BJ (cell line): ENCODE measurements at regions of chrX and their contacts with region 1.

Region 1: GRCh38 chrX:53317365-53318069 is 36.1 kb upstream of the IQSEC2 start:
- DNase-seq: no peak
- H3K4me3 ChIP-seq: no peak overlapping the region
- H3K27me3 ChIP-seq: peaks cover 18% of the 10 kb centered on the region
- CTCF ChIP-seq: peak; percentile 81

Region 2: DNA sequence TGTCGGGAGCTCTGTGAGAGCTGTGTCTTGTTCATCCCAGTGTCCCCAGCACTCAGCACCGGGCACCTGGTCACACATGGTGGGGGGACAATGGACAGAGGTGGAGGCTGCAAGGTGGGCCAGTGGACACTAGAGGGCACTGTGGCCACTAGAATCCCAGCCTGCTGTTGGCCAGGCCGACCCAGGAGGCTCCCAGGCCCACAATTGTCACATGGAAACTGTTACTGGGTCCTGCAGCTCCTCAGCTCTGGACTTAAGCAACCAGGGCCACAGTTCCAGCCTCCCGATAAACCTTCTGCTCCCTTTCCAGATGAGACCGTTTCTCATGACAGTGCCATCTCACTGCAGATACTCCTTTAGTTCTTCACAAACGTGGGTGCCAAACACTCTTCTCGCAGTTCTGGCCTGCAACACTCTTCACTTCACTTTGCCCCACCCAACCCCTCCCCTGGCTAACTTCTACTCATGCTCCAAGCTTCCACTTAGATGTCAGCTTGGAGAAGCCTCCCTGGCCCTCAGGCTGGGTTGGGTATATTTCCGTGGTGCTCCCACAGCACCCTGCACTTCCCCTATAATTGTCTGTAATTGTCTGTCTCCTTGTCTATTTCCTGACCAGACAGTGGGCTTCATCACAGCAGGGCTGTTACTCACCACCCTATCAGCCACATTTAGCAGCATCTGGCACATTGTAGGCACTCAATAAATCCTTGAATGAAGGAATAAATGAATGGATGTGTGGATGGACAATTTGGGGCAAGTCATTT is 32.7 kb before region 1 on chrX:
- CTCF ChIA-PET with region 1: interaction called, 18 read pairs
- POLR2A ChIA-PET with region 1: interaction called, 3 read pairs
- DNase-seq: no peak
- H3K4me3 ChIP-seq: no peak overlapping the region
- H3K27me3 ChIP-seq: no peaks in the 10 kb centered on the region
- CTCF ChIP-seq: peak; percentile 77

Region 3: GRCh38 chrX:53305996-53306937 is 11.2 kb before region 1 on chrX:
- CTCF ChIA-PET with region 1: interaction called, 10 read pairs
- POLR2A ChIA-PET with region 1: no interaction called
- DNase-seq: no peak
- H3K4me3 ChIP-seq: no peak overlapping the region
- H3K27me3 ChIP-seq: no peaks in the 10 kb centered on the region
- CTCF ChIP-seq: no peak

Region 4: GRCh38 chrX:53433651-53434639 is 116.4 kb after region 1 on chrX and contains the start of gene HSD17B10:
- CTCF ChIA-PET with region 1: interaction called, 17 read pairs
- POLR2A ChIA-PET with region 1: no interaction called
- DNase-seq: no peak
- H3K4me3 ChIP-seq: peak within 1 kb of the TSS; percentile 72
- H3K27me3 ChIP-seq: no peaks in the 10 kb centered on the region
- CTCF ChIP-seq: no peak
- polyA plus RNA-seq, gene HSD17B10: 112 and 156 TPM in 2 replicates

Region 5: GRCh38 chrX:53481816-53482465 is 164.4 kb after region 1 on chrX:
- CTCF ChIA-PET with region 1: interaction called, 21 read pairs
- POLR2A ChIA-PET with region 1: no interaction called
- DNase-seq: no peak
- H3K4me3 ChIP-seq: no peak overlapping the region
- H3K27me3 ChIP-seq: no peaks in the 10 kb centered on the region
- CTCF ChIP-seq: peak; percentile 78